CD14-positive monocyte (primary cell): ENCODE measurements at regions of chr21 and their contacts with region 1.

Region 1: GRCh38 chr21:14864211-14865021 is 200.4 kb downstream of the NRIP1 start:
- DNase-seq: peak; percentile 55 to 93 (median 68)
- H3K4me3 ChIP-seq: no peak overlapping the region
- H3K4me3 Mint-ChIP-seq: no peak overlapping the region
- H3K27ac ChIP-seq: peak overlapping the region; percentile 10 to 54
- H3K27ac Mint-ChIP-seq: peak overlapping the region; percentile 58 to 94 (median 79)
- H3K4me1 ChIP-seq: peaks cover 56 to 69% of the 10 kb centered on the region in 2 donors
- H3K4me1 Mint-ChIP-seq: peaks cover 67% of the 10 kb centered on the region
- H3K27me3 ChIP-seq: no peaks in the 10 kb centered on the region
- H3K27me3 Mint-ChIP-seq: no peaks in the 10 kb centered on the region
- CTCF ChIP-seq: peak; percentile 67

Region 2: DNA sequence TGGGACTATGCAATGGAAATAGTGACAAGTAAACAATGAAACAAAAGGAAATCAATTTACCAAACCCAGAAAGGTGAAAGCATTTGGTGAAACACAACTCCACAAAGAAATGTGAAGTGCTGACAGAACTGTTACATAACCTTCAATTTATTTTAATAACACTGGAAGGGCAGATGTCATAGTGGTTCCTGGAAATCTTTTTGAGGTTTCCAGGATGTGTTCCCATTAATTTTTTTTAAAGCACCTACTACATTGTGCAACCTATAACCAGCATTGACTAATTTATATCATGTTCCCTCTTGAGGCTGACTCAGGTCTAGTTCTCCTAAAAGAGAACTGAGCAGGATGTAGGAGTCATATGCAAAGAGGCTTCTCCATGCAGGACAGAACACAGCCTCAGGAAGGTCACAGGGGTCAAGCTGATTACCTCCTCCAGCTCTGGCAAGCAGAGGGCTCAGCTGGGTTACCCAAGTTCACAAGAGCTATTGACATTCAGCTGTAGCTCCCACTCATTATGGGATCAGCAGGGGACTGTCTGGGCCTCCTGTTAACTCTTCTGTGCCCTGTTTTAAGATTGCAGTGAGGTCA is 357.5 kb after region 1 on chr21:
- intact Hi-C with region 1: loop called in 1 of 2 experiments (anchors 5 kb)
- DNase-seq: peak; percentile 92 to 96 (median 95)
- H3K4me3 ChIP-seq: peak overlapping the region in 1 of 3 experiments; percentile 35
- H3K4me3 Mint-ChIP-seq: peak overlapping the region; percentile 20 to 51
- H3K27ac ChIP-seq: peak overlapping the region; percentile 23 to 88
- H3K27ac Mint-ChIP-seq: peak overlapping the region; percentile 87 to 97 (median 93)
- H3K4me1 ChIP-seq: peaks cover 49 to 61% of the 10 kb centered on the region in 2 donors
- H3K4me1 Mint-ChIP-seq: peaks cover 53% of the 10 kb centered on the region
- H3K27me3 ChIP-seq: no peaks in the 10 kb centered on the region
- H3K27me3 Mint-ChIP-seq: peaks cover 0 to 3% (median 0%) of the 10 kb centered on the region in 3 donors
- CTCF ChIP-seq: no peak

Region 3: GRCh38 chr21:15462092-15462491 is 597.7 kb after region 1 on chr21:
- intact Hi-C with region 1: no loop called
- DNase-seq: no peak
- H3K4me3 ChIP-seq: no peak overlapping the region
- H3K4me3 Mint-ChIP-seq: no peak overlapping the region
- H3K27ac ChIP-seq: no peak overlapping the region
- H3K27ac Mint-ChIP-seq: no peak overlapping the region
- H3K4me1 ChIP-seq: no peaks in the 10 kb centered on the region
- H3K4me1 Mint-ChIP-seq: no peaks in the 10 kb centered on the region
- H3K27me3 ChIP-seq: no peaks in the 10 kb centered on the region
- H3K27me3 Mint-ChIP-seq: no peaks in the 10 kb centered on the region
- CTCF ChIP-seq: no peak